ENCODE measurements at regions of chr1 and their contacts with region 1.

Region 1: GRCh38 chr1:160085686-160086455 is 4.5 kb downstream of the KCNJ9 start:
- DNase-seq: peak; percentile 87
- H3K4me3 Mint-ChIP-seq: no peak overlapping the region
- H3K27ac Mint-ChIP-seq: no peak overlapping the region
- H3K4me1 Mint-ChIP-seq: peaks cover 13% of the 10 kb centered on the region
- H3K27me3 Mint-ChIP-seq: peaks cover 21% of the 10 kb centered on the region

Region 2: DNA sequence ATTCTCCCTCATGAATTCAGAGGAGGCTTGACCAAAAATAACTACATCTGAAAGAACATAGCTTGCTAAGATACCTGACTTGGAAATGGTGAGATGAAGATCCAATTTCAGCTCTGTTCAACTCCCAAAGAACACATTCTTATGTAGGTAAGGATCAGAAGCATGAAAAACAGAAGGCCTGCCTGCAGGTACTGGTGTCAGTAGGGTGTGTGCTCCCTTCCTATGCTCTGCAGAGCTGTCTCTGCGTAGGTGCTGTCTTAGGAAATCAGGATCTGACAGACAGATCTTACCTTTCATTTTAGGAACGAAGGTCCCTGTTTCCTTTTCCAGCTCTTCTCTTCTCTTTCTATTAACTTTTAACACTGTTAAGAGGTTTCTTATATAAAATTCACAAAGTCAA is 1379.8 kb before region 1 on chr1:
- CTCF ChIA-PET with region 1: no interaction called
- POLR2A ChIA-PET with region 1: no interaction called
- intact Hi-C with region 1: no loop called
- DNase-seq: no peak
- H3K4me3 Mint-ChIP-seq: no peak overlapping the region
- H3K27ac Mint-ChIP-seq: no peak overlapping the region
- H3K4me1 Mint-ChIP-seq: no peaks in the 10 kb centered on the region
- H3K27me3 Mint-ChIP-seq: no peaks in the 10 kb centered on the region

Region 3: DNA sequence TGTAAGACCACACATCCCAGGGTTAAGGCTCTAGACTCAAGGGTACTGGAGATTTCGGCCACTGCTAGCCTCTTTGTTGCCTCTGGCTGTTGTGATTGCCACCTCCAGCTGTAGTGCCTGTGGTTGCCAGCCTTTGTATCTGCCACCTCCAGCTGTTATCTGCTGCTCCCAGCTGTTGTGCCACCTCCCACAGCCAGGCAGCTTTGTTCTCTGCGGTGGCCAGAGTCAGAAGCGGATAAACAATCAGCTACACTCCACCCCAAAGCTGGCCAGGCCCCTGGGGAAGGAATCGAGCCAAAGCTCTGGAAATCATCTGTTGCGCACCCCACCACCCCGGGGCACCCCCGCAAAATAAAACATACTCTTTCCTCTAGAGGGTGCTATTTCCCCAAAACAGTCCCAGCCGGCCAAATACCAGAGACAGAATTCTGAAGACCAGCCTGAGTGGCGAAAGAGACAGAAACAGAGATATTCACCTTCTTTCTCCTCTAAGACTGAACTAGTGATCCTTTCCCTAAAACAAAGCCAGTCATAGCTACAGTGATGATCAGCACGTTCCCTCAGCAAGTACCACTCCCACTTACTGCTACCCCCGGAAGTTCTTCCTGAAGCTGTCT is 39.3 kb before region 1 on chr1:
- CTCF ChIA-PET with region 1: interaction called, 615 read pairs
- POLR2A ChIA-PET with region 1: interaction called, 3 read pairs
- intact Hi-C with region 1: no loop called
- DNase-seq: peak; percentile 61
- H3K4me3 Mint-ChIP-seq: peak overlapping the region; percentile 50
- H3K27ac Mint-ChIP-seq: no peak overlapping the region
- H3K4me1 Mint-ChIP-seq: peaks cover 9% of the 10 kb centered on the region
- H3K27me3 Mint-ChIP-seq: peaks cover 15% of the 10 kb centered on the region

Region 4: GRCh38 chr1:160219062-160219929 is 133.4 kb after region 1 on chr1:
- CTCF ChIA-PET with region 1: interaction called, 10 read pairs
- POLR2A ChIA-PET with region 1: no interaction called
- intact Hi-C with region 1: no loop called
- DNase-seq: no peak
- H3K4me3 Mint-ChIP-seq: no peak overlapping the region
- H3K27ac Mint-ChIP-seq: no peak overlapping the region
- H3K4me1 Mint-ChIP-seq: no peaks in the 10 kb centered on the region
- H3K27me3 Mint-ChIP-seq: no peaks in the 10 kb centered on the region

Region 5: GRCh38 chr1:160376525-160377131 is 290.8 kb after region 1 on chr1:
- CTCF ChIA-PET with region 1: interaction called, 38 read pairs
- POLR2A ChIA-PET with region 1: no interaction called
- intact Hi-C with region 1: no loop called
- DNase-seq: peak; percentile 33
- H3K4me3 Mint-ChIP-seq: no peak overlapping the region
- H3K27ac Mint-ChIP-seq: no peak overlapping the region
- H3K4me1 Mint-ChIP-seq: peaks cover 11% of the 10 kb centered on the region
- H3K27me3 Mint-ChIP-seq: no peaks in the 10 kb centered on the region

Measured in activated CD4-positive, alpha-beta memory T cell treated with anti-CD3 and anti-CD28 coated beads for 36 hours (primary cell).